ENCODE measurements at regions of chr17 and their contacts with region 1.

Region 1: GRCh38 chr17:3723556-3724369 is at the start of gene HASPIN:
- DNase-seq: peak; percentile 98
- H3K4me3 Mint-ChIP-seq: peak within 1 kb of the TSS; percentile 87
- H3K27ac Mint-ChIP-seq: peak within 1 kb of the TSS; percentile 68
- H3K4me1 Mint-ChIP-seq: peaks cover 45% of the 10 kb centered on the region
- H3K27me3 Mint-ChIP-seq: no peaks in the 10 kb centered on the region
- total RNA-seq, gene HASPIN: 25.1 and 25.3 TPM in 2 replicates

Region 2: DNA sequence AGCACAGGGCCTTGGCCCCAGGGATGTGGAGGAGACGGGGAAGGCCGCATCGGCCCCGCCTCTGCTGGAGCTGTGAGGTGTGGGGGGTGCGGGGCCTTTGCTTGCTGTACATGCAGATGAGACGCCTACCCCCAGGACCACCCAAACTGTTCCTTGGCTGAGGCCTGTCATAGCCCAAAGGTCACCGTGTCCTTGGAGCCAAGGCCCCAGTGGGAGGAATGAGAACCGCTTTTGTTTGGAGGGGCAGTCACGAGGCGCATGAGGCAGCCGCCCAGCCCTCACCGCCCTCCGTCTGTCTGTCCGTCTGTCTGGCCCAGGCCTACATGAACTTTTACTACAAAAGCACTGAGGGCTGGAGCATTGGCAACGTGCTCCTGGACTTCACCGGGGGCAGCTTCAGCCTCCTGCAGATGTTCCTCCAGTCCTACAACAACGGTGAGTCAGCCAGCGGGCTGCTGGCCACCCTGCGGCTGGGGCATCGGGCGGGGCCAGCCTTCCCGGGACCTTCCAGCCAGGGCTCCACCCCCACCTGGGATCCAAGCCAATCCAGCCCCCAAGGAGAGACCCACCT is 64.1 kb before region 1 on chr17:
- intact Hi-C with region 1: no loop called
- DNase-seq: no peak
- H3K4me3 Mint-ChIP-seq: no peak overlapping the region
- H3K27ac Mint-ChIP-seq: no peak overlapping the region
- H3K4me1 Mint-ChIP-seq: no peaks in the 10 kb centered on the region
- H3K27me3 Mint-ChIP-seq: no peaks in the 10 kb centered on the region

Region 3: DNA sequence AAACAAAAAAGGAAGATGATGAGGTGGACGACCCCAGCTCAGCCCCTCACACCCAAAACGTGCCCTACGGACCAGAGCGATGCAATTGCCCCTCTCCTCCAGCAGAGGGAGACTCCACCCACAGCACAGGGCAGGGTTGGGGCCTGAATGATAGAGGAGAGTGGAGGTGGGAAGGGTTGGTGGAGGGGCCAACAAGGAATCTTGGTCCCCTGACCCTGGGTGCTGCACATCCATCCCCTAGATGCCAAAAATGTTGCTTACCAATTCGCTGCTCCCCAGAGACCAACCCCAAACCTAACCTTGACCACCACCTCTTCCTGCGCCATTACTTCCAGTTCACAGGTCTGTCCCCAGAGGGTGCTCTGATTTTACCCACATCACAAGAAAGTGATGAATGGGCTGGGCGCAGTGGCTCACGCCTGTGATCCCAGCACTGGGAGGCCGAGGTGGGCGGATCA is 40.7 kb before region 1 on chr17:
- intact Hi-C with region 1: loop called (anchors 1 kb)
- DNase-seq: peak; percentile 88
- H3K4me3 Mint-ChIP-seq: no peak overlapping the region
- H3K27ac Mint-ChIP-seq: peak overlapping the region; percentile 26
- H3K4me1 Mint-ChIP-seq: peaks cover 22% of the 10 kb centered on the region
- H3K27me3 Mint-ChIP-seq: no peaks in the 10 kb centered on the region

Measured in activated CD4-positive, alpha-beta T cell treated with anti-CD3 and anti-CD28 coated beads, Interleukin-2, amount 10 ng/mL, durations not matched to agents 24 days and 14 days (primary cell).